CD8-positive, alpha-beta T cell (primary cell): ENCODE measurements at regions of chr9 and their contacts with region 1.

Region 1: DNA sequence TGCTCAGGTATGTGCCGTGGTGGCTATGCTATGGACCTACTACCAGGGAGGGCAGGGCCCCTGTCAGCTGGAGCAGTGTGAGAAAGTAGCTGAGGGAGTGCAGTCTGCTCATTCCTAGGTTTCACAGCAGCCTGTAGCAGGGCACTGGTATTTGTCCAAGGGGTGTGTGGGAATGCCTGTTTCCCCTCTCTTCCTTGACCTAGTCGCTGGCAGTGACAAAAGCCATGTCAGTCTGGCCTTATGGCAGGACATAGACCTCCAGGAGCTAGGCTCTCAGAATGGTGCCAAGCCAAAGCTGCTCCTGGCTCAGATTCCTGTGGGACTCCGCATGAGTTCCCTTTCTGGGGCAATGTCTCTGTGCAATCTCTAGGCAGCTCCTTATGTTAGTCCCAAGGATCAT is 253.9 kb upstream of the TYRP1 start:
- DNase-seq: no peak
- ATAC-seq: no peak
- H3K4me3 ChIP-seq: no peak overlapping the region
- H3K4me3 Mint-ChIP-seq: no peak overlapping the region
- H3K27ac ChIP-seq: no peak overlapping the region
- H3K27ac Mint-ChIP-seq: no peak overlapping the region
- H3K4me1 ChIP-seq: no peaks in the 10 kb centered on the region
- H3K4me1 Mint-ChIP-seq: no peaks in the 10 kb centered on the region
- H3K27me3 ChIP-seq: no peaks in the 10 kb centered on the region
- H3K27me3 Mint-ChIP-seq: no peaks in the 10 kb centered on the region
- CTCF ChIP-seq: no peak

Region 2: DNA sequence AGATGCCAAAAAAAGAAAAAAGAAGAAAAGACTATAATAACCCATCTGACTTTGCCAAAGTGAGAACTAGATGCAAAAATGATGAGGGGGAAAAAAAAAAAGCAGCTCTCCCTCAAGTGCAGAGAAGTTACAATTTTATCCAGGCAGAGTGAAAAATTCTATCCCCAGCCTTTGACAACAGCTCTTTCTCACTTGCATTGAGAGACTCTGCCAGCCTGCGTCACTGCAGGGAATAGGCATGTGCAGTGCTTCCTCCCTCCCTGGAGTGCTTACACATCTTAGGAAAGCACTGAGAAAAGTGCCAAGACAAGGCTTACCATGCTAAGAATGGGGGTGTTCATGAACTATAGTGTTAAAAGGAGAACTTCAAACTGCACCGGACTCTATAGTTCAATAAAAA is 164.7 kb before region 1 on chr9:
- CTCF ChIA-PET with region 1: no interaction called
- POLR2A ChIA-PET with region 1: no interaction called
- intact Hi-C with region 1: no loop called
- DNase-seq: no peak
- ATAC-seq: no peak
- H3K4me3 ChIP-seq: no peak overlapping the region
- H3K4me3 Mint-ChIP-seq: no peak overlapping the region
- H3K27ac ChIP-seq: no peak overlapping the region
- H3K27ac Mint-ChIP-seq: no peak overlapping the region
- H3K4me1 ChIP-seq: no peaks in the 10 kb centered on the region
- H3K4me1 Mint-ChIP-seq: no peaks in the 10 kb centered on the region
- H3K27me3 ChIP-seq: no peaks in the 10 kb centered on the region
- H3K27me3 Mint-ChIP-seq: no peaks in the 10 kb centered on the region
- CTCF ChIP-seq: no peak

Region 3: GRCh38 chr9:12351293-12352044 is 87.8 kb before region 1 on chr9:
- CTCF ChIA-PET with region 1: no interaction called
- POLR2A ChIA-PET with region 1: no interaction called
- intact Hi-C with region 1: no loop called
- DNase-seq: no peak
- ATAC-seq: no peak
- H3K4me3 ChIP-seq: no peak overlapping the region
- H3K4me3 Mint-ChIP-seq: no peak overlapping the region
- H3K27ac ChIP-seq: no peak overlapping the region
- H3K27ac Mint-ChIP-seq: no peak overlapping the region
- H3K4me1 ChIP-seq: no peaks in the 10 kb centered on the region
- H3K4me1 Mint-ChIP-seq: no peaks in the 10 kb centered on the region
- H3K27me3 ChIP-seq: no peaks in the 10 kb centered on the region
- H3K27me3 Mint-ChIP-seq: no peaks in the 10 kb centered on the region
- CTCF ChIP-seq: no peak

Region 4: DNA sequence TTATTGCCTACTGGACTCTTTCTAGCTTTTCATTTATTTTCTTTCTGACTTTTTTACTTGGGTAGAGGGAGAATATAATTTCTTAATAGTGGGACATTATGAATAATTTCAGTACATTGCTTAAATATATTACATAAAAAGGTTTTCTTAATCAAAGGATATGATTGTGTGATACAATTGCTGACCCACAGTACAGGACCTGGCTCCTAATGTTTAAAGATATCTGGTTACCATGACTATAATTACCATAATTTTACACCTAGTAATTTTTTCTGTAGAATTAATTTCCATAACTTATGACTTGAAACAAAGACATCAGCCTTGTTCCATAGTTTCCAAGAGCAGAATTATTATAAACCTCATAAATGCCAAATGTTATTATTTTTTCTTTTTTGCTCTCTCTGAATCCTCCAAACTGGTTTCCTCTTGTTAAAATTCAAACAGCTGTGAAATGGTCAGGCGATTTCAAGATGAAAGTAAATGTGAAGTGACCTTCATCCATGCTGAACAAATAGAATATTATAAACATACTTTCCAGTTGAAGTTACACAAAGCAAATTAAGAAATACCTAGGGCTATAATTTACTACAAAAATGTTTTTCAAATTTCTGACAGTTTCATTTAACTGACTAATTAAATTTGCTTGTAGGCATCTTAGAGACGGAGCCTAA is 47.3 kb before region 1 on chr9:
- CTCF ChIA-PET with region 1: no interaction called
- POLR2A ChIA-PET with region 1: no interaction called
- intact Hi-C with region 1: no loop called
- DNase-seq: no peak
- ATAC-seq: no peak
- H3K4me3 ChIP-seq: no peak overlapping the region
- H3K4me3 Mint-ChIP-seq: no peak overlapping the region
- H3K27ac ChIP-seq: no peak overlapping the region
- H3K27ac Mint-ChIP-seq: no peak overlapping the region
- H3K4me1 ChIP-seq: no peaks in the 10 kb centered on the region
- H3K4me1 Mint-ChIP-seq: no peaks in the 10 kb centered on the region
- H3K27me3 ChIP-seq: no peaks in the 10 kb centered on the region
- H3K27me3 Mint-ChIP-seq: no peaks in the 10 kb centered on the region
- CTCF ChIP-seq: no peak

Region 5: DNA sequence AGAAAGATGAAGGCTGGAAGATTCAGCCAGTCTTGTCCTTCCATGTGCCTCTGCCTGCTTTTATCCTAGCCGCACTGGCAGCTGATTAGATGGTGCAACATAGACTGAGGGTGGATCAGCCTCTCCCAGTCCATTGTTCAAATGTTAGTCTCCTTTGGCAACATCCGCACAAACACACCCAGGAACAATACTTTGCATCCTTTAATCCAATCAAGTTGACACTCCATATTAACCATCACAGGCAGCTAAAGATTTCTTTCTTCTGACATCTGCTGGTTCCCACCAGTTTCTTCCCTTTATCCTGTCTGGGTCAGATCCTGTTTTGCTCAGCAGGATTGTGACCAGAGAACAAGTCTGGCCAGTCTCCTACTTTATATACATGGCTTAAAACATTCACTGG is 22.6 kb before region 1 on chr9:
- CTCF ChIA-PET with region 1: no interaction called
- POLR2A ChIA-PET with region 1: no interaction called
- intact Hi-C with region 1: loop called in 1 of 2 experiments (anchors 2 kb)
- DNase-seq: no peak
- ATAC-seq: no peak
- H3K4me3 ChIP-seq: no peak overlapping the region
- H3K4me3 Mint-ChIP-seq: no peak overlapping the region
- H3K27ac ChIP-seq: no peak overlapping the region
- H3K27ac Mint-ChIP-seq: no peak overlapping the region
- H3K4me1 ChIP-seq: no peaks in the 10 kb centered on the region
- H3K4me1 Mint-ChIP-seq: no peaks in the 10 kb centered on the region
- H3K27me3 ChIP-seq: no peaks in the 10 kb centered on the region
- H3K27me3 Mint-ChIP-seq: no peaks in the 10 kb centered on the region
- CTCF ChIP-seq: no peak

Region 6: DNA sequence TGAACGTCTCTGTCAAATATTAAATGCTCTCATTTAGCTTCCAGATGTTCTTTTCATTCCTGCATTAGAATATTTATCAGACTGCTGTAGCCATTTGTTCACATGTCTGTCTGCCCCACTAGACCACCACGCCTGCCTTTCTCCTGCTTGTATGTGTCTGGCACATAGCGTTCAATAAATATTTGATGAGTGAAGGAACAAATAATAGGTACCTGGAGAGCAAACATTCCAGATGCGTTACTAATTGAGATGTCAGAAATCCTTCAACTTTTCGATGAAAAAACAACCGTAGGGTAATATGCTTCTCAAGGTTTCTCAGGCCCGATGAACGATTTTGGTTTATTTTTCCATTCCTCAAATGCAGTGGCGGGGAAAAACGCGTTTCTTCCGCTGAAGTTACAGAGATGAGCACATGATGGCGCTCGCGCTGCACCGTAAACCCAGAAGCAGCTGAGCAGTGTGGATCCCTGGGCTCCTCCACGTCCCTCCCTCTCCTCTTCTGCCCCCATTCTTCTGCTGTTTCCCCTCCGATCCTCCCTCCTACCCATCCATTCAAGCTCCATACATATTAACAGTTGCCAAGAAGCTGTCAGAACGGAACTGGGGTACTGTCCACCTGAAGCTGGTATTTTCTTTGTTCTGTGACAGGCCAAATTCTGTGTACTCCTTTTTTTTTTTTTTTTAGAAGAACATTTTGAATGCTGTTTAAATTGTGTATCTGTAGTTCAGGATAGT is 594.9 kb after region 1 on chr9:
- CTCF ChIA-PET with region 1: no interaction called
- POLR2A ChIA-PET with region 1: no interaction called
- intact Hi-C with region 1: no loop called
- DNase-seq: no peak
- ATAC-seq: no peak
- H3K4me3 ChIP-seq: no peak overlapping the region
- H3K4me3 Mint-ChIP-seq: no peak overlapping the region
- H3K27ac ChIP-seq: no peak overlapping the region
- H3K27ac Mint-ChIP-seq: no peak overlapping the region
- H3K4me1 ChIP-seq: no peaks in the 10 kb centered on the region
- H3K4me1 Mint-ChIP-seq: no peaks in the 10 kb centered on the region
- H3K27me3 ChIP-seq: no peaks in the 10 kb centered on the region
- H3K27me3 Mint-ChIP-seq: no peaks in the 10 kb centered on the region
- CTCF ChIP-seq: no peak